ENCODE measurements at regions of chr5 and their contacts with region 1.

Region 1: GRCh38 chr5:95961617-95962474 is at the start of gene ELL2:
- DNase-seq: peak; percentile 98
- H3K4me3 Mint-ChIP-seq: peak within 1 kb of the TSS; percentile 93
- H3K27ac Mint-ChIP-seq: peak within 1 kb of the TSS; percentile 89
- H3K4me1 Mint-ChIP-seq: peaks cover 40% of the 10 kb centered on the region
- H3K27me3 Mint-ChIP-seq: no peaks in the 10 kb centered on the region
- total RNA-seq, gene ELL2: 75.0 to 78.6 TPM

Region 2: GRCh38 chr5:95486191-95486590 is 475.7 kb before region 1 on chr5:
- CTCF ChIA-PET with region 1: no interaction called
- intact Hi-C with region 1: no loop called
- DNase-seq: no peak
- H3K4me3 Mint-ChIP-seq: no peak overlapping the region
- H3K27ac Mint-ChIP-seq: no peak overlapping the region
- H3K4me1 Mint-ChIP-seq: peaks cover 2% of the 10 kb centered on the region
- H3K27me3 Mint-ChIP-seq: no peaks in the 10 kb centered on the region

Region 3: GRCh38 chr5:95631991-95632675 is 329.7 kb before region 1 on chr5:
- CTCF ChIA-PET with region 1: interaction called, 4 read pairs
- intact Hi-C with region 1: loop called (anchors 5 kb)
- DNase-seq: peak; percentile 89
- H3K4me3 Mint-ChIP-seq: peak overlapping the region; percentile 53
- H3K27ac Mint-ChIP-seq: peak overlapping the region; percentile 94
- H3K4me1 Mint-ChIP-seq: peaks cover 20% of the 10 kb centered on the region
- H3K27me3 Mint-ChIP-seq: no peaks in the 10 kb centered on the region

Region 4: GRCh38 chr5:95870105-95870672 is 91.7 kb before region 1 on chr5:
- CTCF ChIA-PET with region 1: interaction called, 3 read pairs
- intact Hi-C with region 1: loop called (anchors 1 kb)
- DNase-seq: peak; percentile 65
- H3K4me3 Mint-ChIP-seq: peak overlapping the region; percentile 68
- H3K27ac Mint-ChIP-seq: peak overlapping the region; percentile 99
- H3K4me1 Mint-ChIP-seq: peaks cover 59% of the 10 kb centered on the region
- H3K27me3 Mint-ChIP-seq: no peaks in the 10 kb centered on the region

Region 5: GRCh38 chr5:96026406-96027041 is 64.7 kb after region 1 on chr5:
- CTCF ChIA-PET with region 1: no interaction called
- intact Hi-C with region 1: no loop called
- DNase-seq: no peak
- H3K4me3 Mint-ChIP-seq: no peak overlapping the region
- H3K27ac Mint-ChIP-seq: no peak overlapping the region
- H3K4me1 Mint-ChIP-seq: no peaks in the 10 kb centered on the region
- H3K27me3 Mint-ChIP-seq: no peaks in the 10 kb centered on the region

Region 6: DNA sequence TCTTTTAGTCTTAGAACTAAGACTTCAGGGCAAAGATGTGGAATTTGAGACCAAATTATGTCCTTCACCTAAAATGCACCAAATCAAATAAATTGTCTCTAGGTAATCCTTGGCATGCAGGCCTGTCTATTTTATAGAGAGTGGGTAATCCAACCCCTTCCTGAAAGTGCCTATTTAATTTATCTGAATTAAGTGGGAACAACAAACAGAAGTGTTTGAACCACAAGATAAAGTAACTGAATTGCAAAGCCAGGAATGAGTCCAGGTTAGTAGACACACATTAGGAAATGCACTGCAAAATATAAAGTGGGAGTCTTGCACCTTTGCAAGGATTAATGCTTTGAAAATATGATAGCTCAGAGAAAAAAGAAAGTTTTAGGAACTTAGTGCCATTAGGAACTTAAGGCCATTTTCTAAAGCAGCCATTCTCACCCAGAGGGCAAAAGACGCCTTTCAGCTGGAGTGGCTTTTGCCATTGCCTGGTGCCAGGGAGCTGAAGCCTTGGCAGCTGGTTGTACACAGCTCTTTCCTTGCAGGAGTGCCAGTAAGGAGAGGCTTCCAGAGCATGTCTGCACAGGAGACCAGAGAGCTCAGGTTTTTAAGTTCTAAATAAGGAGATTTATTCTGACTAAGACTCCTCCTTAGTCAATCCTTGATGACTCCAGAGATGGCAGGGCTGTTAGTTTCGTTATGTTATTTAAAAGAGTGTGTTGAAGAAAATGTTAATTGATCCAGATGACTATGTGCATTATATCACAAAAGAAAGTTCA is 151.5 kb after region 1 on chr5:
- CTCF ChIA-PET with region 1: no interaction called
- intact Hi-C with region 1: loop called (anchors 1 kb)
- DNase-seq: peak; percentile 19
- H3K4me3 Mint-ChIP-seq: no peak overlapping the region
- H3K27ac Mint-ChIP-seq: peak overlapping the region; percentile 77
- H3K4me1 Mint-ChIP-seq: peaks cover 28% of the 10 kb centered on the region
- H3K27me3 Mint-ChIP-seq: peaks cover 4% of the 10 kb centered on the region

Region 7: GRCh38 chr5:96336351-96336985 is 374.6 kb after region 1 on chr5:
- CTCF ChIA-PET with region 1: interaction called, 21 read pairs
- intact Hi-C with region 1: loop called (anchors 1 kb)
- DNase-seq: peak; percentile 81
- H3K4me3 Mint-ChIP-seq: no peak overlapping the region
- H3K27ac Mint-ChIP-seq: no peak overlapping the region
- H3K4me1 Mint-ChIP-seq: peaks cover 18% of the 10 kb centered on the region
- H3K27me3 Mint-ChIP-seq: peaks cover 16% of the 10 kb centered on the region

Region 8: DNA sequence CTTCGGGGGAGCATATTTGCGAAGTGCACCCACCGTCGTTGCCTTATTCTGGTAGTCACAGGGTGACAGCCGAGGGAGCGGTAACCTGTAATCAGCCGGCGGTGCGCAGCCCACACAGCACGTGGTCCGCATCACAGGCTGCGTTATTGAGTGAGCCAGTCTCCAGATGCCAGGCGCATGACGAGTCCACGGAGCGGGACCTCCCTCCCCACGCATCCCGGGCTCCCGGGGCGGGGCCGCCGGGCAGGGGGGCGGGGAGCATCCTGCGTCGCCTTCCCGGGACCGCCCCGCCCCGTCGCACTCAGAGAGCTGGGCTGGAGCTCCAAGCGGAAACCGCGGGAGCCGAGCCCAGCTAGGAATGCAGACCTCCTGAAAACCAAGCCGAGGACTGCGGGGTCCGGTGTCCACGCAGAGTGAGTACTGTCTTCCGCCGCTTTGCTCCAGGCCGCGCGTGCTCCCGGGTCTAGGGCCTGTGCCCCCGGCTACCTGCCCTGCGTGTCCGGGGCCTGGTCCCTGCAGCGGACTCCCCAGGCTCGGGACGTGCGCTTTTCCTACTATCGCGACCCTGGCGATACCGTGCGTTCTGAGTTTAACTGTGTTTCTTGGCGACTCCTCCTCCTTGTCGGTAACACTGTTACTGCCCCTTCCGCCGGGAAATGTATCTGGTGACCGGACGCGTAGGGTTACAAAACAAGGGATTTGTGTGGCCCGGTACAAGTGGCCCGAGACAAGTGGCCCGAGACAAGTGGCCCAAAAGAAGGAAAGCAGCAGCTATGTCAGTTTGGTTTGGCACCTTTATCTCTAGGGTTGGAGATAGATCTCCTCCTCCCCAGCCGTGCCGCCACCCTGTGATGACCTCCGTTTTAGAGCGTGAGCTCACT is 740.9 kb after region 1 on chr5:
- CTCF ChIA-PET with region 1: no interaction called
- intact Hi-C with region 1: loop called (anchors 2 kb)
- DNase-seq: peak; percentile 89
- H3K4me3 Mint-ChIP-seq: peak overlapping the region; percentile 87
- H3K27ac Mint-ChIP-seq: peak overlapping the region; percentile 88
- H3K4me1 Mint-ChIP-seq: peaks cover 47% of the 10 kb centered on the region
- H3K27me3 Mint-ChIP-seq: no peaks in the 10 kb centered on the region

Measured in activated naive CD4-positive, alpha-beta T cell treated with anti-CD3 and anti-CD28 coated beads for 36 hours (primary cell).